Activated CD4-positive, alpha-beta T cell treated with anti-CD3 and anti-CD28 coated beads for 36 hours (primary cell): ENCODE measurements at regions of chr3 and their contacts with region 1.

Region 1: GRCh38 chr3:183291497-183292040 is 38.5 kb downstream of the B3GNT5 start:
- DNase-seq: no peak
- ATAC-seq: no peak
- H3K4me3 Mint-ChIP-seq: no peak overlapping the region
- H3K27ac Mint-ChIP-seq: no peak overlapping the region
- H3K4me1 Mint-ChIP-seq: peaks cover 13% of the 10 kb centered on the region
- H3K27me3 Mint-ChIP-seq: no peaks in the 10 kb centered on the region

Region 2: GRCh38 chr3:183306798-183307671 is 15.5 kb after region 1 on chr3:
- CTCF ChIA-PET with region 1: interaction called, 11 read pairs
- POLR2A ChIA-PET with region 1: interaction called, 4 read pairs
- intact Hi-C with region 1: loop called (anchors 1 kb)
- DNase-seq: peak; percentile 72
- ATAC-seq: peak; percentile 98
- H3K4me3 Mint-ChIP-seq: no peak overlapping the region
- H3K27ac Mint-ChIP-seq: peak overlapping the region; percentile 78
- H3K4me1 Mint-ChIP-seq: peaks cover 29% of the 10 kb centered on the region
- H3K27me3 Mint-ChIP-seq: no peaks in the 10 kb centered on the region

Region 3: DNA sequence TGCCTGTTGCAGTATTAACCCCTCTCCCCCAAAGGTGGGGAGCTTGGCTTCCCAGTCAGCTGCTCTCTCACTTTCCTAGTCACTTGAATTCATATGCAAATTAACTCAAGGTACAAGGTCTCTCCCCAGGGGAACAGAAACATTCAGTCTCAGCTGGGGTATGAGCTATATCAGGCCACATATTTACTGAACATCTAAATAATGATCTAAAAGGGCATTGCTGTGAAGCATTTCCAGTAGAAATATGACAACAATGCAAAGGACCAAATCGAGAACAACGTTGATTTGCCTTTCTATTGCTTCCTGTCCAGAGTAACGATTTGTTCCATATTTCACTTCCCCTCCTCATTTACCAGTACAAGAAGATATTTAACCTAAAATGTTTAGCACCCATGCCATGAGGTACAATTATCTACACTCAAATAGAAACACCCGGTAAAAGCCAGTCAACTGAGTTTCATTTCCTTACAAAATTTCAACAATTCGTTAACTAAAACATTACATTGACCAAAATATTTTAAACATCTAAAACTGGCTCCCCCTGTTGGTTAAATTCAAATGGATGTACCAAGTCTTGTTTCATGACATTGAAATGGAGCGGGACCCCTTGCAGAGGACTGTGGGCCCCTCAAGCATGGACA is 300.4 kb after region 1 on chr3:
- CTCF ChIA-PET with region 1: no interaction called
- POLR2A ChIA-PET with region 1: no interaction called
- intact Hi-C with region 1: no loop called
- DNase-seq: no peak
- ATAC-seq: peak; percentile 48
- H3K4me3 Mint-ChIP-seq: no peak overlapping the region
- H3K27ac Mint-ChIP-seq: peak overlapping the region; percentile 75
- H3K4me1 Mint-ChIP-seq: peaks cover 42% of the 10 kb centered on the region
- H3K27me3 Mint-ChIP-seq: no peaks in the 10 kb centered on the region

Region 4: DNA sequence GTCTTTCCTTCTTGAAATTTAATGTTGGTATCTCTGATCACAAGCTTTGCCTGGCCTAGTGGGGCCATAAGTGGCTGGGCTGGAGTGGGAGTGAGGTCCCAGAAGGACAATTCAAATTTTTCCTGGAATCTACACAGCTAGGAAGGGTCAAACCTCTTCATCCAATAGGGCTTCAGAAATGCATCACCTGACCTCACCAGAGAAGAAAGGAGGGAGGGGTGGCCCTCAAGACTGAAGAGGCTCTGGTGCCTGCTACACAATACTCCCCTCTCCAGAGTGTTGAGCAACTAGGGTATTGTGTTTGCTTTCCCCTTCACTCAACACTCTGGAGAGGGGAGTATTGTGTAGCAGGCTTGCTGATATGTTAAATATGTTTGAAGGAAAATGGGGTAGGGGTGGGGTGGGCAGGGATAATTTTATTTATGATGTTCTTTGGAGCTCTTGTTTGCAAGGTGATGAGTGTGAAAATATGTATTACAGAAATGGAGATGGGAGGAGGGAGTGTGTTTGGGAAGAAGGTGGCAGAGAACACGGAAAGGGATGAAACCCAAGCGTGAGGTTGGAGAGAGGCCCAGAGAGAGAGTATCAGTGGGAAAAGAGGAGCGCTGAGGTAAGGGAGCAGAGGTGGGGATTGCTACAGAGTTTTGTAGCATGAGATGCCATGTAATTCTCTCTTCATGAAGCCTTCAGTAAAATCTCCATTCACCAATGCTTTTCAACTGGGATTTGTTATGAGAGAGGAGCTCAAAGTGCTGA is 338.2 kb after region 1 on chr3:
- CTCF ChIA-PET with region 1: no interaction called
- POLR2A ChIA-PET with region 1: no interaction called
- intact Hi-C with region 1: no loop called
- DNase-seq: no peak
- ATAC-seq: no peak
- H3K4me3 Mint-ChIP-seq: no peak overlapping the region
- H3K27ac Mint-ChIP-seq: no peak overlapping the region
- H3K4me1 Mint-ChIP-seq: peaks cover 3% of the 10 kb centered on the region
- H3K27me3 Mint-ChIP-seq: no peaks in the 10 kb centered on the region